Activated naive CD4-positive, alpha-beta T cell treated with anti-CD3 and anti-CD28 coated beads for 36 hours (primary cell): ENCODE measurements at regions of chr12 and their contacts with region 1.

Region 1: GRCh38 chr12:46342562-46343033 is 30.0 kb downstream of the SLC38A2 start:
- DNase-seq: peak; percentile 48
- H3K4me3 Mint-ChIP-seq: no peak overlapping the region
- H3K27ac Mint-ChIP-seq: no peak overlapping the region
- H3K4me1 Mint-ChIP-seq: peaks cover 5% of the 10 kb centered on the region
- H3K27me3 Mint-ChIP-seq: no peaks in the 10 kb centered on the region

Region 2: DNA sequence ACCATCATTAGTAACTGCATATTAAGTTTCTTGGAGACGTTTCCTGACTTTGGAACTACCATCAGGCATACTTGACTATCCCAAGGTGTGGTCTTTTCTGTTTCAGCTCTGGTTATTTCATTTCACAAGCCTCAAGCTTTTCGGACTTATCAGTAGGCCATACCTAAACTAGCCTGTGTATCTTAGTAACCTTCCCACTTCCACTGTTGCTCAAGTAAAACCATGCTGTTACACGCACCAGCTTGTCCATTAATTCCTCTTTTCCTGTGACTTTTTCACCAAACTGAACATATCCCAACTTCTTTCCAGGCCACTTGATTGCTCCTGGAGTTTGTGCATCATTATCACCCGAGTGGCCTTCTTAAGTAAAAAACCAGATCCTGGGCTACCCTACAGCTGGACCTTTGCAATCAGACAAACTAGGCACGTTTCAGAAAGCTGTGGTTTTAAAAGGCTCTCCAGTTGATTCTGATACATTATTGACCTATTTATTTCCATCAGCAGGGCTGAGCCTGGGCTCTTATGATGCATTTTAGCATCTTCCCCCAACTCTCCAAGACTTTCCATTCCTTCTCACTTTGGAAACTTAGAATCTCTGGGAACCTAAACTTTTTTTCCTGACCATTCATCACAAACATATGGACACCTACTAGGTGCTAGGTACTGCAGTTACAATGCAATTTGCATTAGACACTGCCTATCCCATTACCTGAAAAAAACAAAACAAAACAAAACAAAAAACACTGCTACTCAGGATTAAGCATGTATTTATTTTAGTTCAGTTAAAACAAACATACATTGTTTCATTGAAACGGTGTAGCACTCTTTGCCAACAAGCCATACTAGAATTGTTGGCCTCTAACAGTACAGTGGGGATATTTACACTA is 15.1 kb after region 1 on chr12:
- CTCF ChIA-PET with region 1: no interaction called
- intact Hi-C with region 1: no loop called
- DNase-seq: no peak
- H3K4me3 Mint-ChIP-seq: no peak overlapping the region
- H3K27ac Mint-ChIP-seq: no peak overlapping the region
- H3K4me1 Mint-ChIP-seq: peaks cover 21% of the 10 kb centered on the region
- H3K27me3 Mint-ChIP-seq: no peaks in the 10 kb centered on the region

Region 3: GRCh38 chr12:46382964-46383653 is 40.5 kb after region 1 on chr12:
- CTCF ChIA-PET with region 1: no interaction called
- intact Hi-C with region 1: no loop called
- DNase-seq: peak; percentile 96
- H3K4me3 Mint-ChIP-seq: peak overlapping the region; percentile 77
- H3K27ac Mint-ChIP-seq: peak overlapping the region; percentile 87
- H3K4me1 Mint-ChIP-seq: peaks cover 38% of the 10 kb centered on the region
- H3K27me3 Mint-ChIP-seq: no peaks in the 10 kb centered on the region

Region 4: DNA sequence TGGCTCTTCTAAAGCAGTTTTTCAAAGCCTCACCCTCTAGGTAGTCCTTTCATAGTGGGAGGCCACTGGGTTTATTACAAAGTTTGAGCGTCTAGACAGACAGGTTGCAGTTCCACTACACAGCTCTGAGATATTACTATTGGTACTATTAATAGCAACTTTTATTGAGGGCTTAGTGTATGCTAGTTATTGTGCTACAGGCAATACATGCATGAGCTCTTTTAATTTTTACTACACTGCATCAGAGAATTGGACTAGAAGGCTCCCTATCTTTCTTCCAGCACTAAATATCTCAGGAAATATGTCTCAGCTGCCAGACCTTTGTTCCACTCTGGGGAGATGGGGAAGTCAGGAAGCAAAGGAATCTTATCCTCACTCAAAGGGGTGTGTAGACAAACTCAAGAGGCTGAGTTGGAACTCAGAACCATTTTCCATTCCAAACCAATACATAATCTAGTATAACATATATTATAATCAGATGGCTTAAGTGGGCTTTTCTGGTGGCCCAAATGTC is 191.8 kb after region 1 on chr12:
- CTCF ChIA-PET with region 1: no interaction called
- intact Hi-C with region 1: no loop called
- DNase-seq: no peak
- H3K4me3 Mint-ChIP-seq: no peak overlapping the region
- H3K27ac Mint-ChIP-seq: no peak overlapping the region
- H3K4me1 Mint-ChIP-seq: peaks cover 3% of the 10 kb centered on the region
- H3K27me3 Mint-ChIP-seq: no peaks in the 10 kb centered on the region

Region 5: DNA sequence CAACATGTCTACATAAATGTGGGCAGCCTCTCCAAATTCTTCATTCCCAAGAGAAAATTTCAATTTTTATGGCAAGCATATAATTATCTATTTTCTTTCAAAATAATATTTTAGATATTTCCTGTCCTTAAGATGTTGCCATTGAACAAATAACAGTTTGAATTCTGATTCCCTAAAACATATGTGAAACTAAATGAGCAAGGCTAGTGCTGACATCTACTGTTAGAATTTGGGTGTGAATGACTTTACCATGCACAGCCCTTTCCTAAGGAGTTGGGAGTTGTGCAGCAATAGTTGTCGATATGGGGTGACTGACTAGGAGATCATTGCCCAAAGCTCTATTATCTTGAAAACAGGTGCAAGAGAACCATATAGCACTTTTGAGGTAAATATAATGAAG is 591.3 kb after region 1 on chr12:
- CTCF ChIA-PET with region 1: no interaction called
- intact Hi-C with region 1: loop called (anchors 2 kb)
- DNase-seq: no peak
- H3K4me3 Mint-ChIP-seq: no peak overlapping the region
- H3K27ac Mint-ChIP-seq: no peak overlapping the region
- H3K4me1 Mint-ChIP-seq: no peaks in the 10 kb centered on the region
- H3K27me3 Mint-ChIP-seq: peaks cover 8% of the 10 kb centered on the region

Region 6: DNA sequence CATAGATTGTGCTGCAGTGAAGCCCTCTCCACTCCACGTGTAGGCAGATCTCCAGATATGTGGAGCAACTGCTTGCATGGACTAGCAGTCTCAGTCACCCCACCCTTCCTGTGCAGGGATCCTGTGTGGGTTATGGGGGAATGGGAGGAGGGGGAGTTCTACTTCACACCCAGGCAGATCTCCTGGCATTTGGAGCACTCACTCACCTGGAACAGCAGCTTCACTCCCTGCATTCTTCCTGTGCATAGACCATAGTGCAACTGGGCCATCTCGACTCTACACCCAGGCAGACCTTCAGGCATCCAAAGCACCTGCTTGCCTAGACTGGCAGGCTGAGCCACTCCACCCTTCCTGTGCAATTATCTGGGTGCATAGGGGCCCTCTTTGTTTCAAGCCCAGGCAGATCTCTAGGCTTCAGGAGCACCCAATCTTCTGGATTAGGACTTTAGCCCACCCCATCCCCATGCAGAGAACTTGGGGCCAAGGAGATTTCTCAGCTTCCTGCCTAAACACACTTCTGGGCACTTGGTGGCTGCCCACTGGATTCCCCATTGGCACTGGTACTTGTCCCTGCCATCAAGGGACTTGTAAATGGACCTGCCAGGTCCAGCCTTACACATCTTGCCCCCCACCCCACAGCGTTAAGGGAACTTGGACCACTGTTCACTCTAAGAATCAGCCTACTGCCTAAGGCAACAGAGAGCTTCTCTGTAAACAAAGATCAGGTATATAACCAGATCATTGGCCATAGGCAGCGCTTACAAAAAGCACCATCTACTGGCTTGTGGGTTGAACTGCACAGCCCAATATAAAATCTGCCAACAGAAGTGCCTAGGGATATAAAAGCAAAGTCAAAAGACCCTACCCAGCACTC is 641.0 kb after region 1 on chr12:
- CTCF ChIA-PET with region 1: no interaction called
- intact Hi-C with region 1: loop called (anchors 1 kb)
- DNase-seq: peak; percentile 55
- H3K4me3 Mint-ChIP-seq: no peak overlapping the region
- H3K27ac Mint-ChIP-seq: no peak overlapping the region
- H3K4me1 Mint-ChIP-seq: peaks cover 9% of the 10 kb centered on the region
- H3K27me3 Mint-ChIP-seq: peaks cover 5% of the 10 kb centered on the region